ENCODE measurements at regions of chr21 and their contacts with region 1.

Region 1: GRCh38 chr21:39125752-39126485 is 57.3 kb downstream of the PSMG1 start:
- DNase-seq: peak; percentile 62
- H3K4me3 ChIP-seq: no peak overlapping the region
- H3K27ac ChIP-seq: no peak overlapping the region
- H3K4me1 ChIP-seq: no peaks in the 10 kb centered on the region
- H3K27me3 ChIP-seq: no peaks in the 10 kb centered on the region
- CTCF ChIP-seq: peak; percentile 29 to 80 (median 64)
- POLR2A ChIP-seq: no peak

Region 2: DNA sequence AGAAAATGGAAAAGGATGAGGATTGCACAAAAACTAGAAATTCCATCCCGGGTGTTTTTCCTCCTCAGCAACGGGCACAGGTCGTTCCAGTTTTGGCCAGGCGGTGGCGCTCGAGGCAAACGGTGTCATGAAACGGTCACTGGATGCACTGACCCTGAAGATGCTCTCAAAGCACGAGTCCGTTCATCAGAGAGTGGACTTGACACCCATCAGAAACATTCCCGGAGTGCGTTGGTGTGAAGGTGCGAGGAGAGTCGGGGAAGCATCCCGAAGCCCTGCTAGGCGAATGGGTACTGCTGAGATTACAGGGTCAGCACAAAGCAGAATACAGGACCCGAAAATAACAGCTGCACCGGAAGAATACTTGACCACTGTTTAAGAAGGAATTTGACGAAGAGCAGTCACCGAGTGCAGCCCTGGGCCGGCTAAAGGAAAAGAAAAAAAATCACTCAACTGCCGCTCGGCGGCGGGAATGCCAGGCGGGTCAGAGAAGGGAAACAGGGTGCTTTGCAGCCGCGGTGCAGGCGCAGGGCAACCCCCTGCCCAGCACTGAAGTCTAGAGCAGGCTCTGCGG is 391.9 kb before region 1 on chr21:
- intact Hi-C with region 1: loop called (anchors 1 kb)
- DNase-seq: peak; percentile 81
- H3K4me3 ChIP-seq: no peak overlapping the region
- H3K27ac ChIP-seq: peak overlapping the region; percentile 25 to 28
- H3K4me1 ChIP-seq: no peaks in the 10 kb centered on the region
- H3K27me3 ChIP-seq: no peaks in the 10 kb centered on the region
- CTCF ChIP-seq: peak; percentile 67 to 93 (median 90)
- POLR2A ChIP-seq: no peak

Region 3: GRCh38 chr21:38965909-38966504 is 159.9 kb before region 1 on chr21:
- intact Hi-C with region 1: no loop called
- DNase-seq: no peak
- H3K4me3 ChIP-seq: no peak overlapping the region
- H3K27ac ChIP-seq: no peak overlapping the region
- H3K4me1 ChIP-seq: no peaks in the 10 kb centered on the region
- H3K27me3 ChIP-seq: no peaks in the 10 kb centered on the region
- CTCF ChIP-seq: no peak
- POLR2A ChIP-seq: no peak

Region 4: GRCh38 chr21:39217356-39218081 is 91.6 kb after region 1 on chr21:
- intact Hi-C with region 1: no loop called
- DNase-seq: no peak
- H3K4me3 ChIP-seq: no peak overlapping the region
- H3K27ac ChIP-seq: no peak overlapping the region
- H3K4me1 ChIP-seq: no peaks in the 10 kb centered on the region
- H3K27me3 ChIP-seq: no peaks in the 10 kb centered on the region
- CTCF ChIP-seq: no peak
- POLR2A ChIP-seq: no peak

Measured in prostate gland (tissue), 2 donors.